Lower leg skin (tissue), 4 donors: ENCODE measurements at regions of chr16 and their contacts with region 1.

Region 1: GRCh38 chr16:10509534-10510025 is 70.8 kb downstream of the EMP2 start:
- DNase-seq: no peak
- H3K4me3 ChIP-seq: no peak overlapping the region
- CTCF ChIP-seq: peak in 1 of 3 donors; percentile 48
- POLR2A ChIP-seq: no peak

Region 2: DNA sequence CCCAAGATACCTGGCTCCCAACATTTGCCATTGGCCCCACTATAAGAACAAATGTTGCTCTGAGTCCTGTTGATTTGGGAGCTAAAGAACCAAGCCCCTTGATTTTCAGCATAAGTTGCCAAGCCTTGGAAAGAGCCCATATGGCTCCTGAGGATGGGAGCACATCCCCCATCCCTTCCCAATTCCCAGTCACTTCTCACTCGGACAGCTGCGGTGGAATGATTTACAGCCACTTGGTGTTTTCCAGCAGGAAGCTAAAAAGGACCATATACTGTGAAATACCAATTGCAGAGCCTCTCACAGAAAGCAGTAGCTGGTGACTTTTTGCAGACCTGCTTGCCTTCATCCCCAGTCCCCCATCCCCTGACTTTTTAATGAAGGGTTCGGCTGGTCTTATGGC is 851.9 kb before region 1 on chr16:
- intact Hi-C with region 1: no loop called
- DNase-seq: no peak
- H3K4me3 ChIP-seq: no peak overlapping the region
- CTCF ChIP-seq: no peak
- POLR2A ChIP-seq: no peak

Region 3: GRCh38 chr16:10256784-10257641 is 252.6 kb before region 1 on chr16:
- intact Hi-C with region 1: loop called (anchors 5 kb)
- DNase-seq: no peak
- H3K4me3 ChIP-seq: no peak overlapping the region
- CTCF ChIP-seq: peak in 1 of 3 donors; percentile 36
- POLR2A ChIP-seq: no peak

Region 4: GRCh38 chr16:10465821-10466220 is 43.8 kb before region 1 on chr16:
- intact Hi-C with region 1: no loop called
- DNase-seq: no peak
- H3K4me3 ChIP-seq: no peak overlapping the region
- CTCF ChIP-seq: no peak
- POLR2A ChIP-seq: no peak

Region 5: DNA sequence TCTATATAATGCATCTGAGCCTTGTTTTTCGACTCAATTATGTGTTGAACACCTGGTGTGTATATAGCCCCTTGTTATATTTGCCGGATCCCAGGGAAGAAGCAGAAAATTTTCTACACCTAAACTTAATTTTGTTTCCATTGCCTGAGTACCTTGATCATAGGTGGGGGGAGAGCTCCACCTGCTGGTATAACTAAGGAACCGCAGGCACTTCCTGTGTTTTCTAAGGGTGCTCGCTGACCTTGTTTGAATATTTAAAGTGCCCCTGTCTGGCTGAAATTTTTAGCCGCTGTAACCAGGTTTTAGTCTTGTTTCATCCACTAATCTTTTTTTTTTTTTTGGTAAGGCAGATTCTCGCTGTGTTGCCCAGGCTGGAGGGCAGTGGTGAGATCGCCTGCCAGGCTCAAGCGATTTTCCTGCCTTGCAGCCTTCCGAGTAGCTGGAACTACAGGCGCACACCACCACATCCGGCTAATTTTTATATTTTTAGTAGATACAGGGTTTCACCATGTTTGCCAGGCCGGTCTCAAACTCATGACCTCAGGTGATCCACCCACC is 227.6 kb after region 1 on chr16:
- intact Hi-C with region 1: loop called (anchors 5 kb)
- DNase-seq: peak; percentile 67 to 86
- H3K4me3 ChIP-seq: no peak overlapping the region
- CTCF ChIP-seq: peak in 1 of 3 donors; percentile 76
- POLR2A ChIP-seq: no peak

Region 6: GRCh38 chr16:12323007-12323758 is 1813.6 kb after region 1 on chr16:
- intact Hi-C with region 1: no loop called
- DNase-seq: no peak
- H3K4me3 ChIP-seq: no peak overlapping the region
- CTCF ChIP-seq: no peak
- POLR2A ChIP-seq: no peak